Mammary epithelial cell (primary cell): ENCODE measurements at regions of chr11 and their contacts with region 1.

Region 1: DNA sequence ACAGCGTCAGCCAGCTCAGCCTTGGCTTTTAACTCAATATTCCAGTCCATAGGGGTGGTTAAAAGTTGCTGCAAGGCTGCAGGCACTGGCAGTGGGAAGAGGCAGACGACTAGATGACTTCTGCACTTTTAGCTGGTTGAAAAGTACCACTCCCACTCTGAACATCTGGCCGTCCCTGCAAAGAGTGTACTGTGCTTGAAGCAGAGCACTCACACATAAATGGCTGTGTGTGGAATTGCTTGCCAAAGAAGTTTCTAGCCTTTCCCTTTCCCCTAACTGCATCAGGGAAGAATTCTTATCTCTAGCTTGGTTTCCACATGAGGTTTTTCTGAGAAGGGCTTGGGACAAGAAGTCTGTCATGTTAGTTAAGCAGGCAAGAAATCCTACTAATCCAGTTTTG is 5.1 kb upstream of the PHLDB1 start:
- DNase-seq: no peak
- H3K4me3 ChIP-seq: no peak overlapping the region
- H3K27ac ChIP-seq: no peak overlapping the region
- H3K4me1 ChIP-seq: no peaks in the 10 kb centered on the region
- H3K27me3 ChIP-seq: no peaks in the 10 kb centered on the region
- CTCF ChIP-seq: no peak

Region 2: DNA sequence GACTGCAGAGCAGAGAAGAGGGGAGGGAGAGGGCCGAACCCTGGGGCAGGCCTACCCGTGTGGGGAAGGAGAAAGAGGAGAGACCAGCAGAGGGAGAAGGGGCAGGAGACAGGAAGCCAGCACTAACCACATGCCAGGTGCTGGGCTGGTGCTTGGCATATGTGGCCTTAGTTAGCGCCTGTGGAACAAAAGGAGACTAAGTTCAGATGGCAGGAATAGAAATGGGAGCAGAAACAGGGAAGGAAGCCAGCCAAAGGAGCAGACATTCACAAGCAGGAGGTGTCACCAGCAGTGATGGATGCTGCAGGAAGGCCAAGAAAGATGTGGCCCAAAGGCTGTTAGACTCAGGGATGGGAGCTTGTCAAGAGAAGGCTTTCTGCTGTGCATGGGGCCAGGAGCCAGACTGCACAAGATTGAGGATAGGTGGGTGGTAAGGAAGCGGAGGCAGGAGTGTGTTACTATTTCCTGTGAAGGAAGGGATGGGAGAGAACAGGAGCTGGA is 50.4 kb after region 1 on chr11:
- CTCF ChIA-PET with region 1: no interaction called
- dilution Hi-C with region 1: loop called (anchors 5 kb)
- in situ Hi-C with region 1: no loop called
- intact Hi-C with region 1: no loop called
- DNase-seq: no peak
- H3K4me3 ChIP-seq: no peak overlapping the region
- H3K27ac ChIP-seq: no peak overlapping the region
- H3K4me1 ChIP-seq: no peaks in the 10 kb centered on the region
- H3K27me3 ChIP-seq: no peaks in the 10 kb centered on the region
- CTCF ChIP-seq: no peak